Colonic mucosa (tissue), 4 donors: ENCODE measurements at regions of chr21 and their contacts with region 1.

Region 1: GRCh38 chr21:27564684-27565301 is 597.9 kb upstream of the ADAMTS5 start:
- DNase-seq: peak; percentile 36
- H3K4me3 ChIP-seq: no peak overlapping the region
- H3K27ac ChIP-seq: no peak overlapping the region
- H3K4me1 ChIP-seq: no peaks in the 10 kb centered on the region
- H3K27me3 ChIP-seq: no peaks in the 10 kb centered on the region
- CTCF ChIP-seq: peak; percentile 52

Region 2: DNA sequence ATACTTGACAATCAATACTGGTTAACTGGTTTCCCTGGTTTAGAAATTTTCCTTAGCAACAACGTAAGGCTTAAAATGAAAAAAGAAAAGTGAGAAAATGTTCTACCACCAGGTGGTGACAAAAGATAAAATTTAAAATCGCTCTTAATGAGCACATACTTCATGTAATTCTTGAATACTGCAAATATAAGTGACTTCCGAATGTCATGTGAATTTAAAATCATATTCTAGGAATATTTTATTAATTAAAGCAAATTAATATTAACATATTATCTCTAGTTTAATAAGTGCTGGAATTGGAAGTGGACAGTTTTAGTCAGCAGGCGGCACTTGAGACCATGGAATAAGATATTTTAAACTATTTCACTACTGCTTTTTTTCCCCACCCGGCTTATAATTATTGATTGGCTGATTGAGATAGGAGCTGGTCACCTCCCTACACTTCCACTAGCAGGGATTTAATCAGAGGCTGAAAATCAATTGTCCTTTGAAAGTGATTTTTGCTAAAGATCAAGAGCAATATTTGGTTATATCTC is 714.6 kb before region 1 on chr21:
- intact Hi-C with region 1: loop called (anchors 5 kb)
- DNase-seq: no peak
- H3K4me3 ChIP-seq: no peak overlapping the region
- H3K27ac ChIP-seq: no peak overlapping the region
- H3K4me1 ChIP-seq: peaks cover 10% of the 10 kb centered on the region
- H3K27me3 ChIP-seq: peaks cover 21% of the 10 kb centered on the region
- CTCF ChIP-seq: peak; percentile 67

Region 3: GRCh38 chr21:27694667-27695066 is 129.9 kb after region 1 on chr21:
- intact Hi-C with region 1: loop called (anchors 5 kb)
- DNase-seq: no peak
- H3K4me3 ChIP-seq: no peak overlapping the region
- H3K27ac ChIP-seq: no peak overlapping the region
- H3K4me1 ChIP-seq: no peaks in the 10 kb centered on the region
- H3K27me3 ChIP-seq: no peaks in the 10 kb centered on the region
- CTCF ChIP-seq: no peak